Ascending aorta (tissue), 2 donors: ENCODE measurements at regions of chr10 and their contacts with region 1.

Region 1: GRCh38 chr10:28910956-28911355 is 233.6 kb downstream of the BAMBI start:
- DNase-seq: no peak
- H3K4me3 ChIP-seq: no peak overlapping the region
- H3K27ac ChIP-seq: peak overlapping the region; percentile 78 to 88
- H3K4me1 ChIP-seq: peaks cover 7 to 33% of the 10 kb centered on the region in 2 donors
- H3K27me3 ChIP-seq: no peaks in the 10 kb centered on the region
- CTCF ChIP-seq: no peak

Region 2: GRCh38 chr10:28684986-28685589 is 225.9 kb before region 1 on chr10:
- intact Hi-C with region 1: no loop called
- DNase-seq: peak in 1 of 2 donors; percentile 27
- H3K4me3 ChIP-seq: no peak overlapping the region
- H3K27ac ChIP-seq: no peak overlapping the region
- H3K4me1 ChIP-seq: peaks cover 3 to 23% of the 10 kb centered on the region in 2 donors
- H3K27me3 ChIP-seq: no peaks in the 10 kb centered on the region
- CTCF ChIP-seq: no peak

Region 3: DNA sequence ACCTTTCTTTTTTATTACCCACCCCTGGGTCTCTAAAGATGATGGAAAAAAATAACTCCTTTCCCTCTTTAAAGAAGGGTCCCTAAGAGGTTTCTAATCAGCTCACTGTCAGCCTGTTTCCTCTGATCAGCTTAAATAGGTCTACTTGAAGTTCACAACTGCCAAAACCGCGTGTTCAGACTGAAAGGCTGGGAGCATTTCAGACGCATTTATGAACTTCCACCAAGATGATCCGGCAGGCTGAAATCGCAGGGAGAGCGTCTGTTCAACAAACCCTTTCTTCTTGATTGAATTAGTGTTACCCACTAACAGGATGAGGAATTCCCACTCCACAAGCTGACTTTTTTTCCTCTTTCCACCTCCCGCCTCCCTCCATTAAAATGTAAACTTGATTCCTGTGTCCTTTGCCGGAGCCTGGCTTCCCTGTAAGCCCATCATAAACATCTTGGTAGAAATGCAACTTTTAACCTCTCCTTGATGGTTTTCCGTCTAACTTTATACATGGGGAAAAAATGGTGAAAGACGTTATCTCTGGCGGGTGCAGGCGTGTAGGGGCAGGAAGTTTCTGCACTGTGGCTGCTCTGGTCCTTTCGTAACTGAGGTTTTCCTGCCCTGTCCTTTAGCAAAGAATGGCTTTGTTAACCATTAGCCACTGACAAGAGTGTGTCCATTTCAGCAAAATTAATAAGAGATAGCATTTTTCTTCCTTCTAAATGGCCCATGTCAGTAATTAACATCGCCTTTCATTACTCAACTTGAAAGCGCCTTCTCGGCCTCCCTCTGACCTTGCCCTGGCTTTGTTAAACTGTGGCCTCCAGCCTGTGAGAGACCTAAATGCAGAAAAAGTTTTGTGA is 103.0 kb before region 1 on chr10:
- intact Hi-C with region 1: loop called (anchors 5 kb)
- DNase-seq: no peak
- H3K4me3 ChIP-seq: peak overlapping the region; percentile 31 to 47
- H3K27ac ChIP-seq: peak overlapping the region; percentile 84 to 89
- H3K4me1 ChIP-seq: peaks cover 3 to 25% of the 10 kb centered on the region in 2 donors
- H3K27me3 ChIP-seq: no peaks in the 10 kb centered on the region
- CTCF ChIP-seq: no peak

Region 4: DNA sequence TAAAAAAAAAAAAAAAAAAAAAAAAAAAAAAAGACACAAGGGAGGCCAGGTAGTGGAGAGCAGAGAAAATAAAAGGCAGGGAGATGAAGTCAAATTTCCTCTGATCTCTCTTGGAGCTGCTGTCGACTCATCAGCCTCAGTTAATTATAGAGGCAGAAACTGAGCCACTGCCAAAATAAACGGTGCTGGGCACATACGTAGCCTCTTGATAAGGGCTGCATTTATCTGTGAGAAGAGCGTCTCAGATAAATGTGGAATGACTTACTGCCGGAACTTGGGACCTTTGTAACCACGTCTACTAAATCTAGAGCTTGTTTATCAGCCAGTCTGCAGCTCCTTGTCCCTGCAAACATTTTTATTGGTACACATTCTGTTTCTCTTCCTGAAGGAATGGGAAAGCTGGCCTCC is 71.4 kb before region 1 on chr10:
- intact Hi-C with region 1: loop called (anchors 5 kb)
- DNase-seq: no peak
- H3K4me3 ChIP-seq: no peak overlapping the region
- H3K27ac ChIP-seq: peak overlapping the region in 1 of 2 donors; percentile 31
- H3K4me1 ChIP-seq: peaks cover 0 to 5% of the 10 kb centered on the region in 2 donors
- H3K27me3 ChIP-seq: no peaks in the 10 kb centered on the region
- CTCF ChIP-seq: no peak

Region 5: GRCh38 chr10:28939281-28940157 is 28.6 kb after region 1 on chr10:
- intact Hi-C with region 1: loop called (anchors 1 kb)
- DNase-seq: peak in 1 of 2 donors; percentile 90
- H3K4me3 ChIP-seq: peak overlapping the region in 1 of 2 donors; percentile 41
- H3K27ac ChIP-seq: no peak overlapping the region
- H3K4me1 ChIP-seq: peaks cover 0 to 12% of the 10 kb centered on the region in 2 donors
- H3K27me3 ChIP-seq: no peaks in the 10 kb centered on the region
- CTCF ChIP-seq: peak in 1 of 3 experiments; percentile 26

Region 6: DNA sequence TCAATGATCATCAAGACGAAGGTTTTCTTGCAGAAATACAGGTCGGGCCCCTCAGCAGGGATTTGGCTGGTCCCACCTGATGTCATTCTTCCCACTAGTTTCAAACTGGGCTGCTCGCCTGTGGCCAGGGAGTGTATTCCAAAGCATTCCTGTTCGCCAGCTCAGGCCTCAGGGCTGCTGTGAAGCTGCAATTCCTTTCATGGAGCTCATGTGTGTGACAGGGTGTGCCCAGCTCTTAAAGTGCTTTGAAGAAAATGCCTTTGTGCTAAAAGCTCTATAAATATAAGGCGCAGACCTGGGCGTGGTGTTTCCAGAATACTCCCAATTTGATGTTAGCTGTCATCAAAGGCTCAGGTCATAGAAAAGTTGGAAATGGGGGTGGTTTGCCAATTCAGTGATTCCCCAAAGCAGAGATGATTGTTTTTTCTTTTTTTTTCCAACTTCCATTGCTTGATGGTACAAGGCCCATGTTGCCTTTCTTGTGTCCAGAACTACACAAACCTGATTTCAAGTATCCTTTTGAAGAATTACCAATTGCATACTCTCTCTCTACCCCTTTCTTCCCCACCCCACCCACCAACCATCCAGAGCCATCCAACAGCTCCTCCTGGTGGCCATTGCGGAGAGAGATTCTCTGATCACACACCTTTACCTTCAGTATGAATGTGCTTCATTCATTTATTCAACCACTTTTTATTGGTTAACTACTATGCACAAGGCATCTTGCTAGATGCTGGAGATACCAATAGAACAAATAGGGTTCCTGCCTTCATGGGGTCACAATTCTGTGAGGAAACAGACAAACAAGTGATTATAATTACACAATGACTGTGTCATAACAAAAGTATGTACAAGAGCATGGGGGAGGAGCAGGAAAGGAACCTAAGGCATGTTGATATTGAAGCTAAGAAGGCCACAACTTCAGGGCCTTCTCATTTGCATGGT is 80.6 kb after region 1 on chr10:
- intact Hi-C with region 1: loop called (anchors 2 kb)
- DNase-seq: peak; percentile 61 to 90
- H3K4me3 ChIP-seq: no peak overlapping the region
- H3K27ac ChIP-seq: peak overlapping the region; percentile 62 to 74
- H3K4me1 ChIP-seq: peaks cover 0 to 11% of the 10 kb centered on the region in 2 donors
- H3K27me3 ChIP-seq: no peaks in the 10 kb centered on the region
- CTCF ChIP-seq: peak; percentile 54 to 79 (median 76)

Region 7: GRCh38 chr10:29535012-29535777 is 624.2 kb after region 1 on chr10:
- intact Hi-C with region 1: no loop called
- DNase-seq: no peak
- H3K4me3 ChIP-seq: peak overlapping the region; percentile 3 to 32
- H3K27ac ChIP-seq: peak overlapping the region; percentile 71 to 73
- H3K4me1 ChIP-seq: peaks cover 3 to 42% of the 10 kb centered on the region in 2 donors
- H3K27me3 ChIP-seq: no peaks in the 10 kb centered on the region
- CTCF ChIP-seq: peak; percentile 38 to 73 (median 66)